ENCODE measurements at regions of chr16 and their contacts with region 1.

Region 1: DNA sequence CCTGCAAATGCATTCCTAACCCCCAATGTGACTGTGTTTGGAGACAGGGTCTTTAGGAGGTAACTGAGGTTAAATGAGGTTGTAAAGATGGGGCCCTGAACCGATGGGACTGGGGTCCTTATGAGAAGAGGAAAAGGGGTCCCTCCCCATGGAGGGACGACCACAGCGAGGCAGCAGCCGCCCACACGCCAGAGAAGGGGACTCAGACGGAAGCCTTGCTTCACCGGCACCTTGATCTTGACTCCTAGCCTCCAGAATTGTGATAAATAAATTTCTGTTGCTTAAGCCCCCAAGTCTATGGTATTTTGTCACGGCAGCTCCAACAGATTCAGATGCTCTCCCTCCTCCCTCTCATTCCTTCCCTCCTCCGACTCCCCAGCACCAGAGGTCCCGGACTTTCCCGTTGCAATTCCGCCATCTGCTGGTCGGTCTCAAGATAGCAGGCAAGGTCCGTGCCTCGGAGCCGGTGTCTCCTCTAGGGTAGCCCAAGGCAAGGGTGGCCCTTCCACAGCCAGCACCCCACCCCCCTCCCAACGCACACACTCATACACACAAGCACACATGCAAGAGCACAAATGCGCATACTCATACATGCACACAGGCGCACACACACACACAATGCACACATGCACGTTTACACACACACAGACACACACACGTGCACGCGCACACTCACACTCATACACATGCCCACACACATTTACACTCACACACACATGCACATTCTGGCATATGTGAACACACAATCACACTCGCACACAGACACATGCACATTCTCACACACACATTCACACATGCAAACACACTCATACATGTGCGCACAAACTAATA is 23.1 kb upstream of the C16orf78 start:
- DNase-seq: peak in 1 of 4 donors; percentile 53
- ATAC-seq: peak; percentile 89
- H3K4me3 ChIP-seq: no peak overlapping the region
- H3K27ac ChIP-seq: no peak overlapping the region
- H3K4me1 ChIP-seq: no peaks in the 10 kb centered on the region
- H3K27me3 ChIP-seq: peaks cover 0 to 45% of the 10 kb centered on the region in 2 donors
- CTCF ChIP-seq: peak; percentile 72 to 78

Region 2: GRCh38 chr16:48687421-48688038 is 663.0 kb before region 1 on chr16:
- intact Hi-C with region 1: loop called (anchors 5 to 10 kb)
- DNase-seq: peak in 3 of 4 donors; percentile 35 to 65 (median 42)
- ATAC-seq: peak; percentile 97
- H3K4me3 ChIP-seq: no peak overlapping the region
- H3K27ac ChIP-seq: no peak overlapping the region
- H3K4me1 ChIP-seq: no peaks in the 10 kb centered on the region
- H3K27me3 ChIP-seq: no peaks in the 10 kb centered on the region
- CTCF ChIP-seq: peak; percentile 66 to 78